Endothelial cell of umbilical vein (primary cell): ENCODE measurements at regions of chr1 and their contacts with region 1.

Region 1: DNA sequence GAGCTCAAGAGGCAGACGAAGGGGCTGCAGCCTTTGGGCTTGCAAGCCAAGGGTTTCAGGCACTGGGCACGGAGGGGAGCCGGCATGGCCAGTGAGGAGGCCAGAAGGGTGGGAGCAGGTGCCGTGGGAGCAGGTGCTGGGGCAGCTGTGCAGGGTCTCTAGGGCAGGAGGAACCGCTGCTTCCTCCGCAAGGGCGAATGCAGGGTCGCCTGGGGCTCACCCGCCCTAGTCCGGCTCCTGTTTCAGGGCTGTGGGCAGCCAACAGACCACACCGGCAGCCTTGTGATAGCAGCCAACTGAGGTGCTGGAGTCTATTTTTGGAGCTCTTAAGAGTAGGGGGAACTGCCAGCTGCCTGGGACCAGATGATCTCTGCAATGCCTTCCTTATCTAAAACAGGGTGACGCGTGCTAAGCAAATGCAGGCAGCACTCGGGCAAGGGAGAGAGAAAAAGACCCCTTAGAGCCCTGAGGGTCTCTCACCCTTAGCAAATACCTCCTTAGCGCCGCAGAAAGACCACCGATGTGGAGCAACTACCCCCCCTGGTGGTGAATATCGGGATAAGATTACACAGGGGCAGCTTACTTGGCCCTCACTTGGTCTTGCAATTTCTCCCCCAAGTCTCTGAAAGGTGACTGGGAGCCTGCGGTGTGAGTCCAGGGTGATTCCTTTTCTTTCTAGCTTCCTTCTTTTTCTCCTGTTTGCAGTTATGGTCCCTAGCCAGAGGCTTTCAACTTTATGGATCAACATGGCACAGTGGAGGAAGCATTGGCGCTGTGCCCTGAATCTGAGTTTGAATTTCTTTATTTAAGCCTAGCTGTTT is 20.7 kb upstream of the MAPKAPK2 start:
- DNase-seq: peak; percentile 76
- H3K4me3 ChIP-seq: no peak overlapping the region
- H3K27ac ChIP-seq: no peak overlapping the region
- H3K4me1 ChIP-seq: no peaks in the 10 kb centered on the region
- H3K27me3 ChIP-seq: peaks cover 36 to 38% of the 10 kb centered on the region in 2 experiments
- CTCF ChIP-seq: peak; percentile 65 to 78
- POLR2A ChIP-seq: no peak

Region 2: GRCh38 chr1:206489980-206490770 is 173.9 kb before region 1 on chr1:
- CTCF ChIA-PET with region 1: interaction called, 49 read pairs
- POLR2A ChIA-PET with region 1: no interaction called
- dilution Hi-C with region 1: no loop called
- intact Hi-C with region 1: loop called (anchors 1 kb)
- DNase-seq: peak; percentile 59
- H3K4me3 ChIP-seq: no peak overlapping the region
- H3K27ac ChIP-seq: no peak overlapping the region
- H3K4me1 ChIP-seq: peaks cover 8% of the 10 kb centered on the region
- H3K27me3 ChIP-seq: no peaks in the 10 kb centered on the region
- CTCF ChIP-seq: peak; percentile 83 to 92
- POLR2A ChIP-seq: no peak

Region 3: GRCh38 chr1:206583707-206584648 is 80.1 kb before region 1 on chr1:
- CTCF ChIA-PET with region 1: interaction called, 12 read pairs
- POLR2A ChIA-PET with region 1: no interaction called
- dilution Hi-C with region 1: no loop called
- intact Hi-C with region 1: no loop called
- DNase-seq: peak; percentile 67
- H3K4me3 ChIP-seq: no peak overlapping the region
- H3K27ac ChIP-seq: no peak overlapping the region
- H3K4me1 ChIP-seq: no peaks in the 10 kb centered on the region
- H3K27me3 ChIP-seq: peaks cover 0 to 1% of the 10 kb centered on the region in 2 experiments
- CTCF ChIP-seq: peak; percentile 87 to 88
- POLR2A ChIP-seq: no peak

Region 4: GRCh38 chr1:206635080-206635977 is 28.7 kb before region 1 on chr1 and contains the start of gene DYRK3:
- CTCF ChIA-PET with region 1: interaction called, 663 read pairs
- POLR2A ChIA-PET with region 1: no interaction called
- dilution Hi-C with region 1: no loop called
- intact Hi-C with region 1: loop called (anchors 1 kb)
- DNase-seq: peak; percentile 93
- H3K4me3 ChIP-seq: peak within 1 kb of the TSS; percentile 72 to 90 (median 80)
- H3K27ac ChIP-seq: peak within 1 kb of the TSS; percentile 59
- H3K4me1 ChIP-seq: peaks cover 13% of the 10 kb centered on the region
- H3K27me3 ChIP-seq: no peaks in the 10 kb centered on the region
- CTCF ChIP-seq: peak in 1 of 2 donors; percentile 28
- POLR2A ChIP-seq: peak; percentile 88
- total RNA-seq, gene DYRK3: 7.4 and 10.9 TPM in 2 replicates

Region 5: DNA sequence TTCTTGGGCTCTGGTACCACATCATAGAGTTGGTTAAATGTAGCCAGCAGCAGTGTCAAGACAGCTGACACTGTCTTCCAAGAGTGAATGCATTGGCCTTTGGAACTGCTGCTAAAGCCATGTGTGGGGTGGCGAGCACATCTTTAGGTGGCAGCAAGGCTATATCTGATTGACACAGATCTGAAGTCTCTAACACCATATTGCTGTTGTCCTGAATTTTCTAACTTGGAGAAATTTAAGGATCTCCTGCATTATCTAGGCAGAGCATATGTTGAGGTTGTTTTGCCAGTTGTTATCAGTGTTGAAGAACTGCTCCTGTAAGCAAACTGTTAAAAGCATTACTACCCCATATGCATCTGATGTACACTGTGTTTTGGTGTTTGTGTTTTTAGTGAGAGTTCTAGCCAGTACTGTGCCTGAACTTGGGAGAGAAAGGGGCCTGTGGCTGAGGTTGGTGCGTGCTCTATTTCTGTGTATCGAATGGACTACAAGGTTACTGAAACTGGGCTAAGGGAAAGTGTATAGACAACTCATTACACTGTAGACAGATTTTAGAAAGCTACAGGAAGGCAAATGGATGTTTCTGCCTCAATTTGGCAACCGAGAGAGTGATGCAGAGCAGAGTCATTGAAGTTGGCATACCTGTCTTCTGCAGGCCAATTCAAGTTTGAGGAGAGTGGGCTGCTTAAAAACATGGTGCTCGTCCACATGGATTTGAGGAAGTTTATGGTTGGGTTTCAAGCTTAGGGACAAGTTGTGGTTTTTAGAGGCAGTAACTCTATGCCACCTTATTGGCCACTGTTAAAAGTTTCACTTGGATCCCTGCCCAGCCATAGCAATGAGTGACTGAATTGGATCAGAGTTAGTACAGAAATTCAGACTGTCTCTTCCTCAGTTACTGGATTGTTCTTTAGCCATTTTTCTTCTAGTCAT is 11.8 kb before region 1 on chr1:
- CTCF ChIA-PET with region 1: interaction called, 52 read pairs
- POLR2A ChIA-PET with region 1: no interaction called
- dilution Hi-C with region 1: no loop called
- intact Hi-C with region 1: no loop called
- DNase-seq: no peak
- H3K4me3 ChIP-seq: no peak overlapping the region
- H3K27ac ChIP-seq: no peak overlapping the region
- H3K4me1 ChIP-seq: no peaks in the 10 kb centered on the region
- H3K27me3 ChIP-seq: peaks cover 2 to 5% of the 10 kb centered on the region in 2 experiments
- CTCF ChIP-seq: no peak
- POLR2A ChIP-seq: no peak

Region 6: GRCh38 chr1:206684478-206685333 is 20.7 kb after region 1 on chr1 and contains the start of gene MAPKAPK2:
- CTCF ChIA-PET with region 1: interaction called, 26 read pairs
- POLR2A ChIA-PET with region 1: interaction called, 3 read pairs
- dilution Hi-C with region 1: no loop called
- intact Hi-C with region 1: no loop called
- DNase-seq: peak; percentile 48
- H3K4me3 ChIP-seq: peak within 1 kb of the TSS; percentile 63 to 94 (median 93)
- H3K27ac ChIP-seq: peak within 1 kb of the TSS; percentile 85
- H3K4me1 ChIP-seq: peaks cover 28% of the 10 kb centered on the region
- H3K27me3 ChIP-seq: peaks cover 32 to 43% of the 10 kb centered on the region in 2 experiments
- CTCF ChIP-seq: no peak
- POLR2A ChIP-seq: no peak
- total RNA-seq, gene MAPKAPK2: 69.1 and 74.2 TPM in 2 replicates

Region 7: GRCh38 chr1:207444514-207445217 is 780.6 kb after region 1 on chr1:
- CTCF ChIA-PET with region 1: no interaction called
- POLR2A ChIA-PET with region 1: no interaction called
- dilution Hi-C with region 1: no loop called
- intact Hi-C with region 1: no loop called
- DNase-seq: no peak
- H3K4me3 ChIP-seq: no peak overlapping the region
- H3K27ac ChIP-seq: no peak overlapping the region
- H3K4me1 ChIP-seq: no peaks in the 10 kb centered on the region
- H3K27me3 ChIP-seq: peaks cover 9 to 24% of the 10 kb centered on the region in 2 experiments
- CTCF ChIP-seq: no peak
- POLR2A ChIP-seq: no peak